Cardiac septum (tissue), 1 donor: ENCODE measurements at regions of chr7 and their contacts with region 1.

Region 1: GRCh38 chr7:21427182-21427870 is 557 bp upstream of the SP4 start:
- DNase-seq: peak; percentile 99

Region 2: GRCh38 chr7:20798081-20798693 is 629.1 kb before region 1 on chr7:
- intact Hi-C with region 1: loop called (anchors 10 kb)
- DNase-seq: no peak